HepG2 (cell line): ENCODE measurements at regions of chr5 and their contacts with region 1.

Region 1: DNA sequence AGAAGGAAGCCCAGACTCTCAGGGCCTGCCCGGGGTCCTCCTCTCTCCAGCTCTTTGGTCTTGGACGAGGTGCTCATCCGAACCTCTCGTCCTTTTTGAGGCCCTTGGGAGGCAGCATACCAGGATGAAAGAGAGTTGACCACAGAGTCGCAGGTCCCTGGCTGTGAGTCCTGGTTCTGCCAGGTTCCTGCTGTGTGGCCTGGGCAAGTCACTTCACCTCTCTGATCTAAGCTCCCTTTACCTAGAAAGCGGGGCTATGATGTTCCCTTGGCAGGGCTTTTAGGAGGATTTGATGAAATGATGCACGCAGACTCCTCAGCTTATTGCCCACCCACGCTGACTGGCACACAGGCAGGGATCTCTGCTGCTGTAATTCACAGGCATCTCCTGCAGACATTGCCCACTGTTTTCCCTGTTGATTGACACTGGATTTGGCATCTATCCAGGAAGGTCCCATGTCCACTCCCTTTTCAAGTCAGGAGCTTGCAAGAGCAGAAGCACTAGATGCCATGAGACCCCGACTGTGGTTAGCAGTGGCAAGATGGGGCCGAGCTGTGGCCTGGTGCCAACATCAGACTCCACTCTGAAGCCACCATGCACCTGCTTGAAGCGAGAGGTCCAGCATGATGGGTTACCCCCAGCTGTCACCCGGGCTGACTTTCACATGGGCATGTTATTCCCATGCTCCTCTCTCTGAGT is 71.5 kb downstream of the MACROH2A1 start:
- DNase-seq: no peak
- ATAC-seq: no peak
- H3K4me3 ChIP-seq: no peak overlapping the region
- H3K27ac ChIP-seq: no peak overlapping the region
- H3K4me1 ChIP-seq: peaks cover 80% of the 10 kb centered on the region
- H3K27me3 ChIP-seq: no peaks in the 10 kb centered on the region
- CTCF ChIP-seq: no peak
- EP300 ChIP-seq: no peak
- POLR2A ChIP-seq: no peak
- RAD21 ChIP-seq: no peak

Region 2: DNA sequence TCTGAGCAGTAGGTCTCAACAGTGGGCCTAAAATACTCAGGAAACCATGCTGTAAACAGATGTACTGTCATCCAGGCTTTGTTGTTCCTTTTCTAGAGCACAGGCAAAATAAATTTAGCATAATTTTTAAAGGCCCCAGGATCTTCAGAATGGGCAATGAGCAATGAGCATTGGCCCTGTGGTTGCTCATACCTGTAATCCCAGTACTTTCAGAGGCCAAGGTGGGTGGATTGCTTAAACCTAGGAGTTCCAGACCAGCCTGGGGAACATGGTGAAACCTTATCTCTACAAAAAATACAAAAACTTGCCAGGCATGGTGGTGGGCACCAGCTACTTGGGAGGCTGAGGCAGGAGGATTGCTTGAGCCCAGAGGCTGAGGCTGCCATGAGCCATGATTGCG is 436.1 kb before region 1 on chr5:
- CTCF ChIA-PET with region 1: no interaction called
- POLR2A ChIA-PET with region 1: no interaction called
- in situ Hi-C with region 1: no loop called
- intact Hi-C with region 1: no loop called
- DNase-seq: no peak
- ATAC-seq: no peak
- H3K4me3 ChIP-seq: no peak overlapping the region
- H3K27ac ChIP-seq: no peak overlapping the region
- H3K4me1 ChIP-seq: peaks cover 2% of the 10 kb centered on the region; the same call in 1 of the 2 replicates
- H3K27me3 ChIP-seq: no peaks in the 10 kb centered on the region
- CTCF ChIP-seq: no peak
- EP300 ChIP-seq: no peak
- POLR2A ChIP-seq: no peak
- RAD21 ChIP-seq: no peak

Region 3: GRCh38 chr5:135208903-135209721 is 118.5 kb before region 1 on chr5:
- CTCF ChIA-PET with region 1: interaction called, 10 read pairs
- POLR2A ChIA-PET with region 1: no interaction called
- in situ Hi-C with region 1: no loop called
- intact Hi-C with region 1: loop called (anchors 1 kb)
- DNase-seq: peak; percentile 79
- ATAC-seq: peak; percentile 83
- H3K4me3 ChIP-seq: no peak overlapping the region
- H3K27ac ChIP-seq: no peak overlapping the region
- H3K4me1 ChIP-seq: peaks cover 21% of the 10 kb centered on the region
- H3K27me3 ChIP-seq: no peaks in the 10 kb centered on the region
- CTCF ChIP-seq: peak; percentile 13; the same call in 1 of the 2 replicates
- EP300 ChIP-seq: peak in 1 of 2 experiments; percentile 12; a peak in 1 of 4 replicates
- POLR2A ChIP-seq: no peak
- RAD21 ChIP-seq: no peak